ENCODE measurements at regions of chr9 and their contacts with region 1.

Region 1: GRCh38 chr9:36204906-36205547 is 14.3 kb downstream of the CLTA start:
- DNase-seq: peak; percentile 47 to 59
- H3K4me3 ChIP-seq: no peak overlapping the region
- H3K4me3 Mint-ChIP-seq: no peak overlapping the region
- H3K27ac Mint-ChIP-seq: no peak overlapping the region
- H3K4me1 ChIP-seq: no peaks in the 10 kb centered on the region
- H3K4me1 Mint-ChIP-seq: no peaks in the 10 kb centered on the region
- H3K27me3 ChIP-seq: no peaks in the 10 kb centered on the region
- H3K27me3 Mint-ChIP-seq: no peaks in the 10 kb centered on the region
- CTCF ChIP-seq: peak; percentile 35 to 53

Region 2: GRCh38 chr9:36190388-36191287 is 14.4 kb before region 1 on chr9 and contains the start of gene CLTA:
- CTCF ChIA-PET with region 1: interaction called, 13 read pairs
- POLR2A ChIA-PET with region 1: interaction called, 19 read pairs
- intact Hi-C with region 1: no loop called
- DNase-seq: peak; percentile 98 to 99
- H3K4me3 ChIP-seq: peak within 1 kb of the TSS; percentile 82
- H3K4me3 Mint-ChIP-seq: peak within 1 kb of the TSS; percentile 95
- H3K27ac Mint-ChIP-seq: peak within 1 kb of the TSS; percentile 81
- H3K4me1 ChIP-seq: peaks cover 7% of the 10 kb centered on the region; the same call in 1 of the 2 replicates
- H3K4me1 Mint-ChIP-seq: peaks cover 38% of the 10 kb centered on the region
- H3K27me3 ChIP-seq: no peaks in the 10 kb centered on the region
- H3K27me3 Mint-ChIP-seq: no peaks in the 10 kb centered on the region
- CTCF ChIP-seq: peak in 1 of 2 experiments; percentile 44
- total RNA-seq, gene CLTA: 256 and 269 TPM in 2 replicates

Region 3: GRCh38 chr9:36328798-36329411 is 123.9 kb after region 1 on chr9:
- CTCF ChIA-PET with region 1: interaction called, 12 read pairs
- POLR2A ChIA-PET with region 1: no interaction called
- intact Hi-C with region 1: no loop called
- DNase-seq: peak; percentile 53 to 67
- H3K4me3 ChIP-seq: no peak overlapping the region
- H3K4me3 Mint-ChIP-seq: no peak overlapping the region
- H3K27ac Mint-ChIP-seq: no peak overlapping the region
- H3K4me1 ChIP-seq: peaks cover 11% of the 10 kb centered on the region
- H3K4me1 Mint-ChIP-seq: peaks cover 25% of the 10 kb centered on the region
- H3K27me3 ChIP-seq: no peaks in the 10 kb centered on the region
- H3K27me3 Mint-ChIP-seq: no peaks in the 10 kb centered on the region
- CTCF ChIP-seq: peak; percentile 70 to 87